H1 (cell line): ENCODE measurements at regions of chr1 and their contacts with region 1.

Region 1: DNA sequence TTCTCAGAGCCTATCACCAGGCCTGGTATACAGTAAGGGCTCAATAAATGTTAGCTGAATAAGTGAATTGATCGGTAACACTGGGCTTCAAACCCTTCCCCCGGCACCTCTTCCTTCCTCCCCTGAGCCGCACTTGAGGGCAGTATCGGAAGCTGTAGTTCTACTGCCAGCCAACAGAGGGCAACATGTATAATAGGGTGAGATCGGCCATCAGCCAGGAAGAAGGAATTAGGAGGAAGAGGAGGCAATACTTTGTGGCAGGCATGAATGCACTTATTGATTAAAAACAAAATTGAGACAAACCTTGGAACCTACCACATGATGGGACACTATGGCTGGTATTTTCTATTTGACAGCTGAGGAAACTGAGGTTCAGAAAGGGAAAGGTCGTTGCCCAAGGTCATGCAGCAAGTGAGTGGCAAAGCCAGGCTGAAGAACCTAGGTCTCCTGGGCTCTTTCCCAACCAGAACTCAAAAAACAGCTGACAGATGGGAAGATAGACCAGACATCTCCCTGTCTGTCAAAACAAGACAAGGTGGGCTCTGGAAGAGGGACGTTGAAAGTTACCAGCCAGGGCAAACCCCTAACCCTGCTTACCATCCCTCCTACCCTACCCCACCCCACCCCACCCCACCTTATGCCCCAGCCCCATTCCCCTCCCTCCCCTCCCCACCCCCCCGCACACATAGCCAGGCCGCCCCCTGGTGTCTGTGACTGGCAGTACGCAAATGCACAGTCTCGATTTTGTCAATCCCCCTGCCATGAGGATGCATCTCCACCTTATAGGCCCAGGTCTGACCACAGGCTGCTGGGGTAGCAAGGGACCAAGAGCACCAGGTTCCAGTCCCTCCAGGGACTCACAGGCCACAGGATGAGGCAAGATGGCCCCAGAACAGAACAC is 107.3 kb upstream of the RUNX3 start:
- DNase-seq: peak in 1 of 2 experiments; percentile 82
- H3K4me3 ChIP-seq: no peak overlapping the region
- H3K27ac ChIP-seq: no peak overlapping the region
- H3K4me1 ChIP-seq: peaks cover 0 to 3% (median under 1%) of the 10 kb centered on the region in 4 experiments; a peak in 2 of 7 replicates
- H3K27me3 ChIP-seq: no peaks in the 10 kb centered on the region
- CTCF ChIP-seq: peak; percentile 82 to 85 (median 83)
- EP300 ChIP-seq: no peak
- POLR2A ChIP-seq: no peak
- RAD21 ChIP-seq: peak; percentile 46 to 66

Region 2: GRCh38 chr1:24946861-24947658 is 90.4 kb before region 1 on chr1:
- CTCF ChIA-PET with region 1: interaction called, 18 read pairs
- POLR2A ChIA-PET with region 1: interaction called, 3 read pairs
- DNase-seq: no peak
- H3K4me3 ChIP-seq: no peak overlapping the region
- H3K27ac ChIP-seq: no peak overlapping the region
- H3K4me1 ChIP-seq: peaks cover 0 to 18% (median 9%) of the 10 kb centered on the region in 4 experiments; a peak in 5 of 7 replicates
- H3K27me3 ChIP-seq: no peaks in the 10 kb centered on the region
- CTCF ChIP-seq: no peak
- EP300 ChIP-seq: no peak
- POLR2A ChIP-seq: no peak
- RAD21 ChIP-seq: no peak

Region 3: GRCh38 chr1:24970399-24970753 is 67.0 kb before region 1 on chr1:
- CTCF ChIA-PET with region 1: interaction called, 14 read pairs
- POLR2A ChIA-PET with region 1: no interaction called
- DNase-seq: peak in 1 of 2 experiments; percentile 23
- H3K4me3 ChIP-seq: no peak overlapping the region
- H3K27ac ChIP-seq: no peak overlapping the region
- H3K4me1 ChIP-seq: peaks cover 0 to 24% (median 11%) of the 10 kb centered on the region in 4 experiments; a peak in 6 of 7 replicates
- H3K27me3 ChIP-seq: no peaks in the 10 kb centered on the region; a peak in 1 of 7 replicates
- CTCF ChIP-seq: peak in 1 of 3 experiments; percentile 0; a peak in 1 of 4 replicates
- EP300 ChIP-seq: no peak
- POLR2A ChIP-seq: no peak
- RAD21 ChIP-seq: no peak; a peak in 1 of 4 replicates

Region 4: GRCh38 chr1:25006770-25007169 is 30.7 kb before region 1 on chr1:
- CTCF ChIA-PET with region 1: interaction called, 59 read pairs
- POLR2A ChIA-PET with region 1: no interaction called
- DNase-seq: no peak
- H3K4me3 ChIP-seq: no peak overlapping the region
- H3K27ac ChIP-seq: no peak overlapping the region
- H3K4me1 ChIP-seq: peaks cover 0 to 6% (median under 1%) of the 10 kb centered on the region in 4 experiments; a peak in 2 of 7 replicates
- H3K27me3 ChIP-seq: 0 out of 7 replicates have a peak, but pooled peaks cover 0 to 2% (median 0%) of the 10 kb centered on the region in 4 experiments
- CTCF ChIP-seq: no peak
- EP300 ChIP-seq: no peak
- POLR2A ChIP-seq: no peak
- RAD21 ChIP-seq: no peak

Region 5: DNA sequence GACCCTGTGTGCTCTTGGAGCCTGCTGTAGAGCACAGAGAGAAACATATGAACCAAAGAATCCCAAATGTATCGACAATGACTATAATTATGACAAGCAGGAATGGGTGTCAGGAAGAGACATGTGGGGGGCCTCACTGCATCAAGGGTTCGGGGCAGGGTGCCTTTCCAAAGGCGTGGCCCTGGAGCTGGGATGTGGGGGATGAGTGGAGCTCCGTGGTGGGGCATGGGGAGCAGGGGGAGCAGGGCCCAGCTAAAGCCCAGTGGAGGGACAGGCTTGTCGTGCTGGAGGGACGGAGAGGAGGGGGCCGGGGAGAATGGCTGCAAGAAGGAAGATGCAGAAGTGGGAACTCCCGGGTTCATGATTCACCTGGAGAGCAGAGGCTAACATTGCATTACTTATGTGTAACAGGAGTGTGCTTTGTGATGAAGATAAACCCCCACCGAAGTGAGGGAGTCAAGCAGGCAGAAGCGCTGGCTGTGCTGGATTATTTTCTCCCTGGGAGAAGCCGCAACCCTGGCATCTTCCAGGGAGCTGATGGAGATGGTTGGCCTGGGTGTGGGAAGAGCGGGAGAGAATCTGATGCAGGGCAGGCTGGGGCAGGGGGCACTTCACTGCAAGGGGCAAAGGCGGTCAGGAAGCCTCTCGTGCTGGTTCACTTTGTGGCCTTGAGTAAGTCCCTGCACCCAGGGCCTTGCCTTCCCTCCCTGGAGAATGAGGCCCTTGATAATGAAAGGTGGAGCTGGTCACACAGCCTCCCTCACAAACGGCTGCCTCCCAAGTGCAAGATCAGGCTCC is 17.3 kb after region 1 on chr1:
- CTCF ChIA-PET with region 1: interaction called, 39 read pairs
- POLR2A ChIA-PET with region 1: interaction called, 3 read pairs
- DNase-seq: no peak
- H3K4me3 ChIP-seq: no peak overlapping the region
- H3K27ac ChIP-seq: no peak overlapping the region
- H3K4me1 ChIP-seq: peaks cover 0 to 12% (median 6%) of the 10 kb centered on the region in 4 experiments; a peak in 6 of 7 replicates
- H3K27me3 ChIP-seq: no peaks in the 10 kb centered on the region; a peak in 1 of 7 replicates
- CTCF ChIP-seq: no peak
- EP300 ChIP-seq: no peak
- POLR2A ChIP-seq: no peak
- RAD21 ChIP-seq: no peak